Natural killer cell (primary cell): ENCODE measurements at regions of chr1 and their contacts with region 1.

Region 1: GRCh38 chr1:228139944-228140656 is at the start of gene GUK1:
- DNase-seq: peak; percentile 100
- ATAC-seq: peak; percentile 83 to 95 (median 86)
- H3K4me3 ChIP-seq: peak within 1 kb of the TSS; percentile 99
- H3K4me3 Mint-ChIP-seq: peak within 1 kb of the TSS; percentile 98
- H3K27ac ChIP-seq: peak within 1 kb of the TSS; percentile 99
- H3K27ac Mint-ChIP-seq: peak within 1 kb of the TSS; percentile 95 to 96
- H3K4me1 ChIP-seq: peaks cover 64% of the 10 kb centered on the region
- H3K4me1 Mint-ChIP-seq: peaks cover 22 to 51% of the 10 kb centered on the region in 2 donors
- H3K27me3 ChIP-seq: no peaks in the 10 kb centered on the region
- H3K27me3 Mint-ChIP-seq: no peaks in the 10 kb centered on the region
- CTCF ChIP-seq: no peak
- total RNA-seq, gene GUK1: 292 to 313 (median 308) TPM

Region 2: GRCh38 chr1:228109073-228109961 is 30.8 kb before region 1 on chr1 and contains the start of gene MRPL55:
- intact Hi-C with region 1: loop called (anchors 1 kb)
- DNase-seq: peak; percentile 99 to 100
- ATAC-seq: peak; percentile 97 to 100 (median 98)
- H3K4me3 ChIP-seq: peak within 1 kb of the TSS; percentile 82
- H3K4me3 Mint-ChIP-seq: peak within 1 kb of the TSS; percentile 93
- H3K27ac ChIP-seq: peak within 1 kb of the TSS; percentile 91
- H3K27ac Mint-ChIP-seq: peak within 1 kb of the TSS; percentile 86 to 99
- H3K4me1 ChIP-seq: peaks cover 25% of the 10 kb centered on the region
- H3K4me1 Mint-ChIP-seq: peaks cover 14 to 24% of the 10 kb centered on the region in 2 donors
- H3K27me3 ChIP-seq: no peaks in the 10 kb centered on the region
- H3K27me3 Mint-ChIP-seq: no peaks in the 10 kb centered on the region
- CTCF ChIP-seq: no peak
- total RNA-seq, gene MRPL55: 50.0 to 70.6 (median 64.1) TPM

Region 3: GRCh38 chr1:228198977-228199590 is 59.0 kb after region 1 on chr1:
- intact Hi-C with region 1: no loop called
- DNase-seq: no peak
- ATAC-seq: no peak
- H3K4me3 ChIP-seq: no peak overlapping the region
- H3K4me3 Mint-ChIP-seq: no peak overlapping the region
- H3K27ac ChIP-seq: no peak overlapping the region
- H3K27ac Mint-ChIP-seq: no peak overlapping the region
- H3K4me1 ChIP-seq: no peaks in the 10 kb centered on the region
- H3K4me1 Mint-ChIP-seq: no peaks in the 10 kb centered on the region
- H3K27me3 ChIP-seq: no peaks in the 10 kb centered on the region
- H3K27me3 Mint-ChIP-seq: no peaks in the 10 kb centered on the region
- CTCF ChIP-seq: no peak

Region 4: GRCh38 chr1:228315945-228316588 is 176.0 kb after region 1 on chr1:
- intact Hi-C with region 1: no loop called
- DNase-seq: peak in 1 of 2 donors; percentile 11
- ATAC-seq: no peak
- H3K4me3 ChIP-seq: no peak overlapping the region
- H3K4me3 Mint-ChIP-seq: no peak overlapping the region
- H3K27ac ChIP-seq: no peak overlapping the region
- H3K27ac Mint-ChIP-seq: no peak overlapping the region
- H3K4me1 ChIP-seq: no peaks in the 10 kb centered on the region
- H3K4me1 Mint-ChIP-seq: no peaks in the 10 kb centered on the region
- H3K27me3 ChIP-seq: no peaks in the 10 kb centered on the region
- H3K27me3 Mint-ChIP-seq: no peaks in the 10 kb centered on the region
- CTCF ChIP-seq: no peak